A549 (cell line): ENCODE measurements at regions of chr19 and their contacts with region 1.

Region 1: GRCh38 chr19:10644260-10645007 is 9.7 kb upstream of the ILF3 start:
- DNase-seq: peak; percentile 63 to 91
- ATAC-seq: peak; percentile 95 to 97
- H3K4me3 ChIP-seq: no peak overlapping the region
- H3K27ac ChIP-seq: 0 out of 6 replicates have a peak overlapping the region, but pooled peaks of 1 of the 2 experiments have one; percentile 41
- H3K4me1 ChIP-seq: no peaks in the 10 kb centered on the region
- CTCF ChIP-seq: peak; percentile 68
- EP300 ChIP-seq: no peak
- POLR2A ChIP-seq: no peak
- RAD21 ChIP-seq: peak; percentile 79 to 88

Region 2: GRCh38 chr19:10388957-10389356 is 255.5 kb before region 1 on chr19:
- CTCF ChIA-PET with region 1: no interaction called
- POLR2A ChIA-PET with region 1: no interaction called
- DNase-seq: peak; percentile 45 to 77
- ATAC-seq: peak; percentile 75 to 79
- H3K4me3 ChIP-seq: no peak overlapping the region
- H3K27ac ChIP-seq: no peak overlapping the region
- H3K4me1 ChIP-seq: no peaks in the 10 kb centered on the region
- CTCF ChIP-seq: peak; percentile 81
- EP300 ChIP-seq: no peak
- POLR2A ChIP-seq: no peak
- RAD21 ChIP-seq: peak; percentile 81 to 82

Region 3: GRCh38 chr19:10553943-10554381 is 90.5 kb before region 1 on chr19:
- CTCF ChIA-PET with region 1: no interaction called
- POLR2A ChIA-PET with region 1: no interaction called
- DNase-seq: no peak
- ATAC-seq: no peak
- H3K4me3 ChIP-seq: no peak overlapping the region
- H3K27ac ChIP-seq: no peak overlapping the region
- H3K4me1 ChIP-seq: no peaks in the 10 kb centered on the region
- CTCF ChIP-seq: no peak
- EP300 ChIP-seq: no peak
- POLR2A ChIP-seq: no peak
- RAD21 ChIP-seq: no peak

Region 4: DNA sequence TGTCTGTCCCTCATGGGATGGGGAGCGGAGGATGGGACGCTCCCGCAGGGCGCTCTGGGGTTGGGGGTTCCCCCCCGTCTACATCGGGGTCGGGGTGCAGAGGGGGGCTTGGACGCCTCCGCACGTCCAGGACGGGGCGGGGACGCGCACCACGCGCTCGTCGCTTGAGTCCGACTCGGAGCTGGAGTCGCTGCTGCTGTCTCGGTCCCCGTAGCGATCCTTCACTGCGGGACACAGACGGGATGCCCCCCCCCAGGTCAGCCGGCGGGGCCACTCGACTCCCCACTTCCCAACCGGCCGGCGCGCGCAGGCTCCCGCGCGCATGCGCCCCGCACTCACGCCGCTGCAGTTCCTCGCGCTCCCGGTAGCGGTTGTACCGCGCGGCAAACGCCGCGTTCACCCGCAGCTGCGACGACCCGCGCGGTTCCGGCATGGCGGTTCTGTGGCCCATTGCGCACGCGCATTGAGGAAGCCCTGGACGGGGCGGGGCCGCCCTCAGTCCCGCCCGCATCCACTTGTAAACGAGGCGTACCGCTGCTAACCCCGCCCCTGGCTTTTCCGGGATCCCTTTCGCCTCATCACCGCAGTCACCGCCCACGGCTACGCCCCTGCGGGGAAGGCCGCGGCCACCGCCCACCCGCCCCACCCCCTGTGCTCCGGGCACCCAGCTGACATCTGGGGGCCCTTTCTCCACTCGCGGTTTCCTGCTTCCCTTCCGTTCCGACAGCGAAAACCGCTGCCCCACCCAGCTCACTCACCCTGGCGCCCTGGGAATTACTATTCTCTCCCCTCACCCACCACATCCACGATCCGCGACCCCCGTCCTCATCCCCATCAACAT is 78.6 kb before region 1 on chr19 and contains the start of gene KRI1:
- CTCF ChIA-PET with region 1: interaction called, 31 read pairs
- POLR2A ChIA-PET with region 1: no interaction called
- DNase-seq: peak; percentile 90 to 95
- ATAC-seq: peak; percentile 68 to 77
- H3K4me3 ChIP-seq: peak within 1 kb of the TSS; percentile 75
- H3K27ac ChIP-seq: peak within 1 kb of the TSS; percentile 81 to 96
- H3K4me1 ChIP-seq: peaks cover 25% of the 10 kb centered on the region
- CTCF ChIP-seq: no peak
- EP300 ChIP-seq: no peak
- POLR2A ChIP-seq: peak; percentile 89
- RAD21 ChIP-seq: no peak
- polyA plus RNA-seq, gene KRI1: 10.6 and 21.6 TPM in 2 replicates

Region 5: GRCh38 chr19:10586396-10586795 is 58.0 kb before region 1 on chr19:
- CTCF ChIA-PET with region 1: interaction called, 296 read pairs
- POLR2A ChIA-PET with region 1: interaction called, 9 read pairs
- DNase-seq: no peak
- ATAC-seq: no peak
- H3K4me3 ChIP-seq: no peak overlapping the region
- H3K27ac ChIP-seq: no peak overlapping the region
- H3K4me1 ChIP-seq: no peaks in the 10 kb centered on the region
- CTCF ChIP-seq: no peak
- EP300 ChIP-seq: no peak
- POLR2A ChIP-seq: no peak
- RAD21 ChIP-seq: no peak

Region 6: DNA sequence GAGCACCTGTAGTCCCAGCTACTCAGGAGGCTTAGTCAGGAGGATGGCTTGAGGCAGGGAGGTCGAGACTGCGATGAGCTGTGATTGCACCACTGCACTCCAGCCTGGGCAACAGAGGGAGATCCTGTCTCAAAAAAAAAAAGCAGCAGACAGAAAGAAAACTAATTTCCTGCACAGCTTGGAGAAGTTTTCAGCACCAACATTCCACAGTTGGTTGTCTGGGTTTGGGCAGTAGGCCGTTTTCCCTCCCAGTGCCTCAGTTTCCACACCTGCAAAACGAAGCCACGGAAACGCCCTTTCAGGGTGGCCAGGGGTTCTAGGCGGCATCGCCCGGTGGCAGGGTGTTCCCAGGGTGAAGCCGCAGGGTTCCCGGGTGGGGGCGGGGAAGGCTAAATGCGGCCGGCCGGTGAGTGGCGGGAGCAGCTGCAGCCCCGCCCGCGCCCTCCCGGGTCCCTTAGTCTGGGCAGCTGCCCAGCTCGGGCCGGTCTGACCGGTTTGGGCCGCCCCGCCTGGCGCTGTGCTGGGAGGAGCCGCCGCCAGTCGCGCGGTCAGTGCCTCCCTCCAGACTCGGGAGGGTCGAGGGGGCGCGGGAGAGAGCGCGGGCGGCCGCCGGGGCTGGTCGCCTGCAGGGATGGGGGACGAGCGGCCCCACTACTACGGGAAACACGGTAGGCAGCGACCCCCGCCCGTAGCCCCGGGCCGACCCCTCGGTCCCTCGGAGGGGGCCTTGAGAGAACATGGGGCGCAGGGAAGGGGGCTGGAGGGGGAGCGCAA is 19.2 kb before region 1 on chr19 and contains the start of gene SLC44A2:
- CTCF ChIA-PET with region 1: interaction called, 14 read pairs
- POLR2A ChIA-PET with region 1: interaction called, 10 read pairs
- DNase-seq: peak in 1 of 2 experiments; percentile 46
- ATAC-seq: peak; percentile 87 to 91
- H3K4me3 ChIP-seq: peak within 1 kb of the TSS; percentile 49
- H3K27ac ChIP-seq: peak within 1 kb of the TSS; percentile 74 to 90
- H3K4me1 ChIP-seq: 0 out of 3 replicates have a peak, but pooled peaks cover 4% of the 10 kb centered on the region
- CTCF ChIP-seq: no peak
- EP300 ChIP-seq: no peak
- POLR2A ChIP-seq: no peak
- RAD21 ChIP-seq: no peak
- polyA plus RNA-seq, gene SLC44A2: 8.3 and 10.3 TPM in 2 replicates

Region 7: GRCh38 chr19:10712045-10712444 is 67.6 kb after region 1 on chr19:
- CTCF ChIA-PET with region 1: no interaction called
- POLR2A ChIA-PET with region 1: no interaction called
- DNase-seq: no peak
- ATAC-seq: no peak; a peak in 1 of 6 replicates
- H3K4me3 ChIP-seq: no peak overlapping the region
- H3K27ac ChIP-seq: no peak overlapping the region
- H3K4me1 ChIP-seq: no peaks in the 10 kb centered on the region
- CTCF ChIP-seq: no peak
- EP300 ChIP-seq: no peak
- POLR2A ChIP-seq: no peak
- RAD21 ChIP-seq: no peak

Region 8: DNA sequence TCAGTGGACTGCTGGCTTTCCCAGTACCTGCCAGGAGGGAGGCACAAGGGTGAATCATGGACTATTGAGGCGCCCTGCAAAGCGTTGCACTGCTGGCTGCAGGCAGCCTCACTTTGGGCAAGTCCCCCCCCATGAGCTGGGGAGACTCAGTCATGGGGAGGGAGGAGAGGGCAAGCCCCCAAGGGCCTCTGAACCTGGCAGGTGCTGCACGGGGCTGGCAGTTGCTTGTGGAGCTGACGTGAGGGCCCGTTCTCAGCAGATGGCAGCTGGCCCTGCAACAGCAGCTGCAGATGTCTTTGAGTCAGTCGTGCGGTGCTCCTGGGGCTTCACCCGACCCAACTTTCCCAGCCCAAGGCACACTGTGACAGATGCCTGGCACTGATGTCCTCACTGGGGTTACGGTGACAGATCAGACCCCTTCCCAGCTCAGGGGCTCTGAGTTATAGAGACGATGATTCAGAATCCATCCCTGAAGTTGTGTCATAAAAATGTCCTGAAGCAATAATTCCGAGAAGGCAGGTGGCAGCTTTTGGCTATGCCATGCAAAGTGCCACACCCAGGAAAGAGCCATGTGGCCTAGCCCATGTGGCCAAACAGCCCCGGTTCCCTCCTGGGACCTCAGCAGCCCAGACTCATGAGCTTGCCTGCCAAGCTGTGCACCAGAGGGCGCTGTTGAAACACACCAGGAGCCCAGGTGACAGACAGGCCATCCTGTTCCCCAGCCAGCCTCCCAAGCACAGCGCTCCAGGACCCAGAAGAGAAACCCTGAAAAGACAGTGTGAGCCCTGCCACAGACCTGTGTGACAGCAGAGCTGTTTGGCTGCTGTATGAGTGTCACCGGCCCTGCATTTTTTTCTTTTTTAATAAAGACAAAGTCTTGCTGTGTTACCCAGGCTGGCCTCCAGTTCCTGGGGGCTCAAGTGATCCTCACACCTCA is 391.3 kb after region 1 on chr19:
- CTCF ChIA-PET with region 1: no interaction called
- POLR2A ChIA-PET with region 1: no interaction called
- DNase-seq: peak; percentile 84 to 86
- ATAC-seq: peak; percentile 93 to 98
- H3K4me3 ChIP-seq: no peak overlapping the region
- H3K27ac ChIP-seq: 0 out of 6 replicates have a peak overlapping the region, but pooled peaks of 1 of the 2 experiments have one; percentile 5
- H3K4me1 ChIP-seq: 0 out of 3 replicates have a peak, but pooled peaks cover 4% of the 10 kb centered on the region
- CTCF ChIP-seq: peak; percentile 74
- EP300 ChIP-seq: no peak
- POLR2A ChIP-seq: no peak
- RAD21 ChIP-seq: peak; percentile 72 to 81